Sigmoid colon (tissue), 7 donors: ENCODE measurements at regions of chr17 and their contacts with region 1.

Region 1: GRCh38 chr17:46818319-46818928 is at the start of gene WNT3:
- DNase-seq: no peak
- H3K4me3 ChIP-seq: peak within 1 kb of the TSS in 3 of 4 donors; percentile 22 to 40 (median 37)
- H3K27ac ChIP-seq: no peak within 1 kb of the TSS
- H3K4me1 ChIP-seq: peaks cover 0 to 24% (median 23%) of the 10 kb centered on the region in 4 donors
- H3K27me3 ChIP-seq: peaks cover 58 to 90% (median 67%) of the 10 kb centered on the region in 3 donors
- CTCF ChIP-seq: no peak
- EP300 ChIP-seq: no peak
- POLR2A ChIP-seq: no peak
- total RNA-seq, gene WNT3: 0.49 to 0.71 (median 0.54) TPM in 3 of 4 donors, not detected in the other

Region 2: GRCh38 chr17:46742565-46743270 is 75.7 kb before region 1 on chr17:
- intact Hi-C with region 1: loop called (anchors 10 kb)
- DNase-seq: no peak
- H3K4me3 ChIP-seq: no peak overlapping the region
- H3K27ac ChIP-seq: peak overlapping the region in 2 of 4 donors; percentile 9 to 22
- H3K4me1 ChIP-seq: peaks cover 0 to 11% (median 6%) of the 10 kb centered on the region in 4 donors
- H3K27me3 ChIP-seq: no peaks in the 10 kb centered on the region
- CTCF ChIP-seq: no peak
- EP300 ChIP-seq: no peak
- POLR2A ChIP-seq: no peak

Region 3: GRCh38 chr17:46841561-46842379 is 23.3 kb after region 1 on chr17:
- intact Hi-C with region 1: no loop called
- DNase-seq: no peak
- H3K4me3 ChIP-seq: no peak overlapping the region
- H3K27ac ChIP-seq: no peak overlapping the region
- H3K4me1 ChIP-seq: peaks cover 0 to 9% (median 2%) of the 10 kb centered on the region in 4 donors
- H3K27me3 ChIP-seq: peaks cover 0 to 43% (median 32%) of the 10 kb centered on the region in 3 donors
- CTCF ChIP-seq: peak in 1 of 4 experiments; percentile 62
- EP300 ChIP-seq: no peak
- POLR2A ChIP-seq: no peak